Left cardiac atrium (tissue), 4 donors: ENCODE measurements at regions of chr1 and their contacts with region 1.

Region 1: GRCh38 chr1:77978969-77979876 is at the start of gene FUBP1:
- DNase-seq: peak; percentile 95
- ATAC-seq: peak; percentile 94
- total RNA-seq, gene FUBP1: 54.3 to 78.5 TPM

Region 2: GRCh38 chr1:78004719-78005447 is 25.7 kb after region 1 on chr1 and contains the start of gene DNAJB4:
- intact Hi-C with region 1: loop called in 1 of 2 experiments (anchors 1 kb)
- DNase-seq: peak; percentile 63
- ATAC-seq: peak; percentile 99 to 100
- total RNA-seq, gene DNAJB4: 78.6 to 105 TPM

Region 3: GRCh38 chr1:78045926-78046778 is 66.9 kb after region 1 on chr1 and contains the start of gene GIPC2:
- intact Hi-C with region 1: loop called in 1 of 2 experiments (anchors 5 kb)
- DNase-seq: peak; percentile 46
- ATAC-seq: peak; percentile 67 to 82
- total RNA-seq, gene GIPC2: 1.9 to 3.1 TPM

Region 4: GRCh38 chr1:78114034-78114956 is 135.1 kb after region 1 on chr1:
- intact Hi-C with region 1: loop called (anchors 5 to 10 kb)
- DNase-seq: peak; percentile 33
- ATAC-seq: peak; percentile 79 to 82